ENCODE measurements at regions of chr1 and their contacts with region 1.

Region 1: DNA sequence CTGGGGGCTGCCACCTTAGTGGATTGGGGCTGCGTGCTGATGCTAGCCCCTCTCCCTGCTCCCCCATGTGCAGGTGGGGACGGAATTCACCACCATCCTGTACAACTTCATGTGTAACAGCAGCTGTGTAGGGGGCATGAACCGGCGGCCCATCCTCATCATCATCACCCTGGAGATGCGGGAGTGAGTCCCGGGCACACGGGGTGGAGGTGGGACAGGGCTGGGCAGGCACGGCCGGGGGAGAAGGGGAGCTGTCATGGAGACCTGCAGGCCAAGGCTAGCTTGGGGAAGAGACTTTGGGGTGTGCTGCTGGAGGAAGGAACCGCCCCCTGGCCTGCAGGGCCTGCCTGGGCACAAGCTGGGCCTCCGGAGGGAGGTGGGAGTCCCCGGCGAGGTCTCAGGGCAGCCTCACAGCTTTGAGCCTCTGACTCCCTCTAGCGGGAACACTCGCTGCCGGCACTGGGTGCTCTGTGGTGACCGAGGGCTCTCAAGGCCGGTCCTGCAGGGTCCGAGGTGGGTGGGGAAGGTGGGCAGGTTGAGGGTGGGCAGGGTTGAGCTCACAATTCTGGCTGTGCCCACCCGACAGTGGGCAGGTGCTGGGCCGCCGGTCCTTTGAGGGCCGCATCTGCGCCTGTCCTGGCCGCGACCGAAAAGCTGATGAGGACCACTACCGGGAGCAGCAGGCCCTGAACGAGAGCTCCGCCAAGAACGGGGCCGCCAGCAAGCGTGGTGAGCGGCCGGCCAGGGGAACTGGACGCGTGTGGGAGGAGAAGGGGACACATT is 25.0 kb upstream of the CCDC27 start:
- DNase-seq: peak; percentile 61
- ATAC-seq: peak; percentile 49
- H3K4me3 Mint-ChIP-seq: no peak overlapping the region
- H3K27ac Mint-ChIP-seq: no peak overlapping the region
- H3K4me1 Mint-ChIP-seq: no peaks in the 10 kb centered on the region
- H3K27me3 Mint-ChIP-seq: peaks cover 2% of the 10 kb centered on the region

Region 2: DNA sequence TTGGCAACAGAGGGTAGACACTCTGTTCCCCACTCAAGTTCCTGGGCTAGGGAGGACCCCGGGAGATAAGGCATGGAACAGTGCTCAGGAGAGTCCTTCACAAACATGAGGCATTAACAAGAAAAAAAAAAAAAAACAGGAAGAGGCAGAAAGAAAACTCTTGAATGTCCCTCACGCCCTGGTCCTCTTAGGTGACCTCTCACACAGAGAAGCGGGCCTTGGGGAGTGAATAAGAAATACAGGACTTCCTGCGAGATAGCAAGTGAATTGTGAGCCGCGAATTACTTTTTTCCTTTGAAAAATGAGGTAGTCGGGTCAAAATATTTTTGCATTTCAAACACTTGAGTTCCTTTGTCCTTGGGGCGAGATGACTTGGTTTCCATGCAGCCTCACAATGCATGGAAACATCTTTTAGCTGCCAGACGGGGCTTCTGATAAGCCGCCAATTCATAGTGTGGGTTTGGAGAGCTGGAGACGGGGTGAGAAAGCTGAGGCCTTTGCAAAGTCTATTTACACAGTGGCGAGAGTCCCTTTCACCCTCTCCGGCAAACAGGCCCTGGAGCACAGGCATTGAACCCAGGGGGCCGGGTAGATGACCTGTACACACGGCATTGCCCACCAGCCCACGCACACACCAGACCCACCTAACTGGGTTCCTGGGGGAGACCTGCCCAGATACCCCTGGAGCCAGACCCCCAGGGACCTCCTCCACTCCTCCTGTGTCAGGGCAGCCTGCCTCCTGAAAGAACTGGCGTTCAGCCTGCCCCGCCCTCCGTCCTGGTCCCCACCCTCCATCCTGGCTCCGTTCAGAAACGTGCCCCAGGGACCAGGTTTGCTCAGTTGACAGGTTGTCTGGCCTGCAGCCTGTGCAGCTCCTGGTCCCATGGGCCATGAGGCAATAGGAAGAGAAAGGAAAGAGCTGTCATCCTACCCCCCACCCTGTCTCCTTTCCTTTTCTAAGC is 465.9 kb before region 1 on chr1:
- CTCF ChIA-PET with region 1: no interaction called
- POLR2A ChIA-PET with region 1: no interaction called
- intact Hi-C with region 1: no loop called
- DNase-seq: no peak
- ATAC-seq: no peak
- H3K4me3 Mint-ChIP-seq: no peak overlapping the region
- H3K27ac Mint-ChIP-seq: no peak overlapping the region
- H3K4me1 Mint-ChIP-seq: no peaks in the 10 kb centered on the region
- H3K27me3 Mint-ChIP-seq: peaks cover 2% of the 10 kb centered on the region

Region 3: GRCh38 chr1:3453203-3453761 is 274.0 kb before region 1 on chr1:
- CTCF ChIA-PET with region 1: interaction called, 5 read pairs
- POLR2A ChIA-PET with region 1: no interaction called
- intact Hi-C with region 1: loop called in 1 of 2 experiments (anchors 1 kb)
- DNase-seq: peak; percentile 87
- ATAC-seq: peak; percentile 89
- H3K4me3 Mint-ChIP-seq: no peak overlapping the region
- H3K27ac Mint-ChIP-seq: no peak overlapping the region
- H3K4me1 Mint-ChIP-seq: peaks cover 3% of the 10 kb centered on the region
- H3K27me3 Mint-ChIP-seq: peaks cover 2% of the 10 kb centered on the region

Region 4: DNA sequence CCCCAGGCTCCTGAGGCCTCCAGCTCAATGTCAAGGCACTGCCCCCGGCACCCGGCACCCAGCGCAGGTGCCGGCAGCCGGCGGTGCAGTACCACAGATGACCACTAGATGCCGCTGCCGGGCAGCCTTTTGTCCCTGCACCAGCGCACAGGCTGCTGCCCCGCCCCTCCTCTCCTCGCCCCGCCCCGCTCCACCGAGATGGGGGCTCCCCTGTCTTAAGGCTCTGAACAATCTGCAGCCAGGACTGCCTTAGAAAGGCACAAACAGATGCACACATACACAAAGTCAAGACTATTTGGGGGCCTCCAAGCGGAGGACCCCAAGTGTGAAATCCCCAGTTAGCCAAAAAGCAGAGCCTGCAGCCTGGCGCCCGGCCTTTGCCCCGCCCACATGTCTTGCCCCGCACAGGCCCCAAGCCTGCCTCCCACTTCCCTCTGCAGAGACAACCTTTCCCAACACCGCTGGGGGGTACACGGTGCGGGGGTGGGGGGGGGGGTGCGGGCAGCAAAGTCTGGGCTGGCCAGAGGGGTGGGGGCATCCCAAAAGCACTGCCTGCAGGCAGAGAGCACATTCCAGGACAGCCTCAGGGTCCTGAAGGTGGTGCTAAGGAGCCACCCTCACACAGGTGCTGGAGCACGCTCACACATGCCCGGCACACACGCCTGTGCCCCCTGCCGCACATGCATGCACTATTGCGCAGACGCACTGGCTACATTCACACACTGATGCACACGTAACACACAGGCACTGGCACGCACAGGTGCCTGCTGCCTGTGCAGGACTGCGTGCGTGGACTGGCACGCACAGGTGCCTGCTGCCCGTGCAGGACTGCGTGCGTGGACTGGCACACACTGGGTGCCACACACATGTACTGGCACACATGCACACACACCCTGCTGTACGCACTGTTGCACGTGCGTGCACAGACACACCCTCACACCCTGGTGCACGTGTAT is 235.7 kb before region 1 on chr1:
- CTCF ChIA-PET with region 1: interaction called, 3 read pairs
- POLR2A ChIA-PET with region 1: no interaction called
- intact Hi-C with region 1: loop called (anchors 1 to 10 kb)
- DNase-seq: peak; percentile 93
- ATAC-seq: peak; percentile 96
- H3K4me3 Mint-ChIP-seq: no peak overlapping the region
- H3K27ac Mint-ChIP-seq: no peak overlapping the region
- H3K4me1 Mint-ChIP-seq: peaks cover 3% of the 10 kb centered on the region
- H3K27me3 Mint-ChIP-seq: no peaks in the 10 kb centered on the region

Region 5: GRCh38 chr1:3564921-3565827 is 162.1 kb before region 1 on chr1:
- CTCF ChIA-PET with region 1: no interaction called
- POLR2A ChIA-PET with region 1: no interaction called
- intact Hi-C with region 1: loop called (anchors 1 to 10 kb)
- DNase-seq: peak; percentile 55
- ATAC-seq: peak; percentile 55
- H3K4me3 Mint-ChIP-seq: no peak overlapping the region
- H3K27ac Mint-ChIP-seq: no peak overlapping the region
- H3K4me1 Mint-ChIP-seq: no peaks in the 10 kb centered on the region
- H3K27me3 Mint-ChIP-seq: no peaks in the 10 kb centered on the region

Region 6: DNA sequence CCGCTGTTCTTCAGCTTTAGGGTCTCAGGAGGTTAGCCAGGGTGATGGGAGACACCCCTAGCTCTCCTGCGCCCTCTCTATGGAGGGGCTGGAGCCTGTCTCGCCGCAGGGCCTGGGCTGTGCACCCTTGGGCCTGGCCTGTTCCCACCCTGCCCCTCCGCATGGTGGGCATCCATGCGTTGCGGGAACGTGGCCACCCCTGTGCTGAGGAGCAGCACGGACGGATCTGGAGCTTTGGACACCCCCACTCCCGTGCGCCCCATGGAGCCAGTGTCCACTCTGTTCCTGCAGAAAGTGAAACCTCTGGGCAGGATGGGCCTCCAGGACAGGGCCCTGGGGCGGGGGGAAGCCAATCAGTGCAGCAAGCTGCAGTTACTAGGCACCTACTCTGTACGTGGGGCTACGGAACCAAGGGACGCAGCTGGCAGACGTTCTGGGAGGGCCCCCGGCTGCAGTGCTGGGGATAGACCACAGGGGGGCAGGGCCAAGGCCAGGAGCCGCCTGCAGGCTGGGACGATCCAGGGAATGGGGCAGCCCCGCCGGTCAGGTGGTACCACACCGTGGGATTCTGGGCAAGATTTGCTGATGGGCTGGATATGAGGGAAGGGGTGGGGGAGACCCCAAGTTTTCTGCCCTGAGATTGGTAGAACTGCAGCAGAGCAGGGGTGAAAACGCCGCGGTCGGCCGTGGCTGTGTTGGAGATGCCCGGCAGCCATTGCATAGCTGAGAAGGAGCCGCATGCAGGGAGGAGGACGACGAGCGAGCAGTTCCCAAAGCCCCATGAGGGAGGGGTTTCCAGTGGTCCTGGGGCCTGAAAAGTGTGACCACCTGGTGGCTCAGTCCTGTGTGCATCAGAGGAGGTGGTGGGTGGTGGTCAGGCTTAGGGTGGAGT is 31.7 kb before region 1 on chr1:
- CTCF ChIA-PET with region 1: no interaction called
- POLR2A ChIA-PET with region 1: no interaction called
- intact Hi-C with region 1: loop called in 1 of 2 experiments (anchors 2 kb)
- DNase-seq: peak; percentile 65
- ATAC-seq: peak; percentile 76
- H3K4me3 Mint-ChIP-seq: no peak overlapping the region
- H3K27ac Mint-ChIP-seq: no peak overlapping the region
- H3K4me1 Mint-ChIP-seq: peaks cover 3% of the 10 kb centered on the region
- H3K27me3 Mint-ChIP-seq: peaks cover 2% of the 10 kb centered on the region

Region 7: GRCh38 chr1:3831433-3832088 is 104.3 kb after region 1 on chr1:
- CTCF ChIA-PET with region 1: no interaction called
- POLR2A ChIA-PET with region 1: no interaction called
- intact Hi-C with region 1: no loop called
- DNase-seq: no peak
- ATAC-seq: no peak
- H3K4me3 Mint-ChIP-seq: no peak overlapping the region
- H3K27ac Mint-ChIP-seq: no peak overlapping the region
- H3K4me1 Mint-ChIP-seq: no peaks in the 10 kb centered on the region
- H3K27me3 Mint-ChIP-seq: no peaks in the 10 kb centered on the region